Heart left ventricle (tissue), 16 donors: ENCODE measurements at regions of chr3 and their contacts with region 1.

Region 1: GRCh38 chr3:151168269-151169094 is 34.5 kb downstream of the GPR171 start:
- DNase-seq: peak; percentile 70 to 87 (median 77)
- ATAC-seq: peak in 3 of 4 donors; percentile 76 to 83 (median 78)
- H3K4me3 ChIP-seq: no peak overlapping the region
- H3K27ac ChIP-seq: peak overlapping the region in 1 of 12 donors; percentile 86
- H3K4me1 ChIP-seq: peaks cover 0 to 46% (median 0%) of the 10 kb centered on the region in 12 donors
- H3K27me3 ChIP-seq: no peaks in the 10 kb centered on the region
- CTCF ChIP-seq: peak; percentile 56 to 86 (median 74)
- POLR2A ChIP-seq: no peak

Region 2: GRCh38 chr3:151183265-151183671 is 14.8 kb after region 1 on chr3:
- intact Hi-C with region 1: no loop called
- DNase-seq: no peak
- ATAC-seq: peak in 1 of 4 donors; percentile 49
- H3K4me3 ChIP-seq: no peak overlapping the region
- H3K27ac ChIP-seq: no peak overlapping the region
- H3K4me1 ChIP-seq: peaks cover 0 to 13% (median 1%) of the 10 kb centered on the region in 12 donors
- H3K27me3 ChIP-seq: no peaks in the 10 kb centered on the region
- CTCF ChIP-seq: no peak
- POLR2A ChIP-seq: no peak

Region 3: DNA sequence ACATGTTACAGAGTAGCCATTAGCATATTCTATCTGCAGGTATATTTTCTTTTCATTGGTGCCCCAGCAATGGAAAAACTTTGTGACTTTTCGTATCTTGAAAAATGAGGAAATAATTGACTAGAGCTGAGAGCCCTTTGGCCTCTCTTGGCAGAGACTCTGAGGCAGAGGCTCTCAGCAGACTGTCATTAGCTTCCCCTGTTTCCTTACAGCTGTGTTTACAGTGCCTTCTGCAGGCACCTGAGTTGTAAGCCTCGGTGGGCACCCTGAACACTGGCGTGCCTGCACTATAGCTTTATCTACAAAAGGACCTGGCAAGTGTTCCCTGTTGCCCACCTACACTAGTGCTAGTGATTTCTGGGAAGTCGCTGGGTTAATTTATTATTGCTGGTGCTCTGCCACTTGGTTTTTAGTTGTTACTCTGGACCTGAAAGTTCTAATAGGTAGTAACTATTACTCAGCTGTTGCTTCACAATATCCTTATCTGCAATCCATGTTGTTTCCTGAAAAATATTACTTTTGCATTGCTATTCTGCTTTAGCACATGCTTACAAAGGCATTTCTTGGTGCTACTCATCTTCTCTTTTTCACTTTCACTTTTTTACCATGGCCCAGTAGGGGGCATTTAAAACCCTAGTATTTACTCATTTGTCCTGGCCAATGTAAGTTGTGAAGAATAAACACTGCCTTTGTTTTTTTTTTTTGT is 42.3 kb after region 1 on chr3:
- intact Hi-C with region 1: loop called in 1 of 10 experiments (anchors 5 kb)
- DNase-seq: no peak
- ATAC-seq: peak in 2 of 4 donors; percentile 24 to 36
- H3K4me3 ChIP-seq: no peak overlapping the region
- H3K27ac ChIP-seq: peak overlapping the region in 1 of 12 donors; percentile 74
- H3K4me1 ChIP-seq: peaks cover 0 to 23% (median 0%) of the 10 kb centered on the region in 12 donors
- H3K27me3 ChIP-seq: no peaks in the 10 kb centered on the region
- CTCF ChIP-seq: peak in 2 of 12 donors; percentile 16 to 18
- POLR2A ChIP-seq: no peak

Region 4: GRCh38 chr3:151227807-151228665 is 59.6 kb after region 1 on chr3:
- intact Hi-C with region 1: loop called in 7 of 10 experiments (anchors 2 to 5 kb)
- DNase-seq: peak; percentile 60 to 75 (median 70)
- ATAC-seq: peak; percentile 65 to 94 (median 88)
- H3K4me3 ChIP-seq: no peak overlapping the region
- H3K27ac ChIP-seq: peak overlapping the region in 11 of 12 donors; percentile 19 to 86 (median 62)
- H3K4me1 ChIP-seq: peaks cover 0 to 46% (median 14%) of the 10 kb centered on the region in 12 donors
- H3K27me3 ChIP-seq: no peaks in the 10 kb centered on the region
- CTCF ChIP-seq: peak; percentile 84 to 96 (median 90)
- POLR2A ChIP-seq: no peak

Region 5: DNA sequence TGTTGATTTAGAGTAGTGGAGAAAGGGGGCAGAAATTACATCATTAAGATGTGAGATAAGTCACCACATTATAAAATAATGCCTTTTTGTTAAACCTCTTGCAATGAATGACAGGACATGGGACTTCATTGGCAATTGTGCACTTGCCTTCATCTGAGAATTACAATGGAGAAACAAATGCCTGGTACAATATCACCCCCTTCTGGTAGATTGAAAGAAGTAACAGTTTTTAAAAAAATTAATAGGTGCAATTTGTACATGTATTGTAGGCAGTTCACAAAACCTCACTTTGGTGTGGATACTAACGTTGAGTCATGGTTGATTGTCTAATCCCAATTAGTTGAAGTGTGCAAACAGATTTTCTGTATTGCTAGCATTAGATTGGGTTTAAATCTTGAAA is 114.4 kb after region 1 on chr3:
- intact Hi-C with region 1: loop called (anchors 1 to 5 kb)
- DNase-seq: no peak
- ATAC-seq: peak in 3 of 4 donors; percentile 54 to 73 (median 63)
- H3K4me3 ChIP-seq: no peak overlapping the region
- H3K27ac ChIP-seq: peak overlapping the region in 6 of 12 donors; percentile 6 to 74 (median 46)
- H3K4me1 ChIP-seq: peaks cover 0 to 35% (median 0%) of the 10 kb centered on the region in 12 donors
- H3K27me3 ChIP-seq: no peaks in the 10 kb centered on the region
- CTCF ChIP-seq: peak; percentile 48 to 81 (median 68)
- POLR2A ChIP-seq: no peak

Region 6: GRCh38 chr3:151327571-151328198 is 159.2 kb after region 1 on chr3:
- intact Hi-C with region 1: loop called in 2 of 10 experiments (anchors 5 kb)
- DNase-seq: no peak
- ATAC-seq: peak in 1 of 4 donors; percentile 51
- H3K4me3 ChIP-seq: peak overlapping the region in 8 of 12 donors; percentile 6 to 56 (median 24)
- H3K27ac ChIP-seq: peak overlapping the region in 2 of 12 donors; percentile 20 to 72
- H3K4me1 ChIP-seq: peaks cover 0 to 41% (median 0%) of the 10 kb centered on the region in 12 donors
- H3K27me3 ChIP-seq: no peaks in the 10 kb centered on the region
- CTCF ChIP-seq: peak; percentile 42 to 72 (median 60)
- POLR2A ChIP-seq: no peak